MCF 10A (cell line): ENCODE measurements at regions of chr5 and their contacts with region 1.

Region 1: DNA sequence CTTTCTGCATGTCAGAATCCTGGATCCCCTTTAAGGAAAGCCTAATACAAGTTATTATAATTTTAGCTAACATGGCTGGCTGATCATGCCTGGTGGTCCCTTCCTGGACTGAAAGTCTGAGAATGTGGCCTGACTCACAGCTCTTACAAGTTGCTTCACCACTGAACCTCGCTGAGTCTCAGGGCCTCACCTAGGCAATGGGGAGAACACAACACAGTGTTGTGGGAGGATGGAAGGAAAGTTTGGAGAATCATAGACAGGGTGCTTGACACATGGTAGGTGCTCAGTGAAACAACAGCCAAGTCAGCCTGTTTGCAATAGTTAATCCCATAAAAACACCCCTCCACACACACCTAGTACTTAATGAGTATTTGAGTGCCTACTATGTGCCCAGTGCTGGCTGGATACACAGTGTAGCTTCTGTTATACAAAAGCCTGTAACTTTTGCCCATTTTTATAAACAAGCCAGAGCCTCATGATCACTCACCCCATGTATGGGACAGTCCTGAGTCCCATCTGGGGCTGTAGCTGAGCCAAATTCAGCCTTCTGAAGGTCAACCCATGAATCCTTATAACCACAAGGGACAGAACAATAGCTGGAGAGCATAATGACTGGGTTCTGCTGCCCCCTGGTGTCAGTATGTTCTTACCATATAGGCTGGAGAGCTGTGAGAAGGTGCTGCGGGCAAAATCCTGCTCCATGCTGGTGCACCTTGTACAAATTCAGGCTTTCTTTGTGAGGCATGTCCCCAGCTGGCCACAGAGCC is 3.9 kb downstream of the ACSL6 start:
- DNase-seq: peak; percentile 90
- H3K4me3 Mint-ChIP-seq: no peak overlapping the region
- H3K27ac Mint-ChIP-seq: no peak overlapping the region
- H3K4me1 Mint-ChIP-seq: peaks cover 19% of the 10 kb centered on the region
- H3K27me3 Mint-ChIP-seq: no peaks in the 10 kb centered on the region
- CTCF ChIP-seq: peak; percentile 95

Region 2: DNA sequence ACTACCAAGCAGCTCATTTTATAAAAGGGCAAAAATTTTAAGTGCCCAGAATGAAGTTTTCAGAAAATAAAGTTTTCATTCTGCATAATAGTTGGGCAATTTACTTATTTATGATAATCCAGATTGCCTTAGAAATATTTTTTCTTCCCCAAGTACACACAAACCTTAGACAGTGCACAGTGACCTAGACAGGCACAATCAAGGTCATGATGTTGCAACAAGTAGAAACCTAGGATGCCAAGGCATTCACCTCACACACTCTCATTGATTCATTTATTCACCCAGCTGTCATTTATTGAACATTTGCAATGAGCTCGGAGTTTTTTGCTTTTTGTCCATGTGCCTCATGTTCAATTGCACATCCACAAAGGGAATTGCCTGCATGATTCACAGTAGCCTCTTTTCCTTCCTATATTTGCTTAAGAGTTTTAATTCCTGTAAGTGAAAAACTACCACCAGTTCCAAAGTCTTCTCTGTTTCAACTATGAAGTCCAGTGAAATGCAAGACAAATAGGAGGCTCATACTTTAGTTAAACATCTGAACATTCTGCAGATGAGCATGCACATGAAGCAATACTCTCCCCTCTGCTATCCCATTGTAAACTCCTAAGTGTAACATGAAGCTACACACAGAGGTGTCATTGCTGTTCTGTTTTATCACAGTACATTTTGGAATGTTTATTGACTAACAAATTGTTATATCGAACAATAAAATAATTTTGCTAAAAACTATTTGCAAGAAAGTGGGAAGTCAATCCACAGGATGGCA is 965.4 kb before region 1 on chr5:
- CTCF ChIA-PET with region 1: no interaction called
- POLR2A ChIA-PET with region 1: no interaction called
- intact Hi-C with region 1: no loop called
- DNase-seq: no peak
- H3K4me3 Mint-ChIP-seq: no peak overlapping the region
- H3K27ac Mint-ChIP-seq: no peak overlapping the region
- H3K4me1 Mint-ChIP-seq: no peaks in the 10 kb centered on the region
- H3K27me3 Mint-ChIP-seq: no peaks in the 10 kb centered on the region
- CTCF ChIP-seq: no peak

Region 3: GRCh38 chr5:131514316-131515283 is 493.0 kb before region 1 on chr5:
- CTCF ChIA-PET with region 1: no interaction called
- POLR2A ChIA-PET with region 1: interaction called, 3 read pairs
- intact Hi-C with region 1: loop called (anchors 1 kb)
- DNase-seq: peak; percentile 34
- H3K4me3 Mint-ChIP-seq: no peak overlapping the region
- H3K27ac Mint-ChIP-seq: peak overlapping the region; percentile 13
- H3K4me1 Mint-ChIP-seq: peaks cover 15% of the 10 kb centered on the region
- H3K27me3 Mint-ChIP-seq: no peaks in the 10 kb centered on the region
- CTCF ChIP-seq: peak; percentile 15

Region 4: DNA sequence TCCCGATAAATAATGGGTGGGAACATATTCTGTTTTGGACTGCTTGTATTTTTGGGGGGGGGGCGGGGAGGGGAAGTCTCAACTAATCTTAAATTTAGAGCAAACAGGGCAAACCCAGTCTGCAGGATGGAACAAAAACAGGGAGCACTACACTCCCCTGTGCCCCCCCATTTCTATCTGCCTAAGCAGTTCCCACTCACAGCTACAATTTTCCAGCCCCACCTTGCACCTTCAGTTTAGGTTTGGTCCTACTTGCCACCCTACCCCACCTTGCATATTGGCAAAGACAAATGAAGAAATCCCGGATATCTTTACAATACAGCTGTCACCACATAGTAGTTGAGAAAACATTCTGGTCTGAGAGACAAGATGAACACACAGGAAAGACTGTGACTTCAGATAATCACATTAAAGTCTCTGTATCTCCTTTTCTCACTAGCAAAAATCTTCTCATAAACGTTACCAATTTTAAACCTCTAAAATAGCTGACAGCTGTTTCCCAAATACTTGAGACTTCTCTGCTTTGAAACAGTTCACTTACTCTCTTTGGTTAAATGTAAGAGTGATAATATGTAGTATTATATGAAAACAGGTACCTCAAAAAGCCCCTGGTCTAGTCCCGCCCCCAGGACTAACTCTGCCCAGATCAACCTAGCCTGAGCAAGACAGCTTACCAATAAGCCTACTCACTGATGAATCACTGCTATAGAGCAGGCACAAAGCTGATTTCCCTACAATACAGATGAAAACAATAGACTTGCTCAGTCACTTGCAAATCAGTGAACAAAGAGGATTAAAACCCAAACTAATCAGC is 367.3 kb before region 1 on chr5:
- CTCF ChIA-PET with region 1: interaction called, 12 read pairs
- POLR2A ChIA-PET with region 1: interaction called, 3 read pairs
- intact Hi-C with region 1: loop called (anchors 2 kb)
- DNase-seq: peak; percentile 32
- H3K4me3 Mint-ChIP-seq: no peak overlapping the region
- H3K27ac Mint-ChIP-seq: no peak overlapping the region
- H3K4me1 Mint-ChIP-seq: peaks cover 6% of the 10 kb centered on the region
- H3K27me3 Mint-ChIP-seq: no peaks in the 10 kb centered on the region
- CTCF ChIP-seq: no peak

Region 5: GRCh38 chr5:131810510-131811249 is 196.9 kb before region 1 on chr5:
- CTCF ChIA-PET with region 1: interaction called, 163 read pairs
- POLR2A ChIA-PET with region 1: interaction called, 5 read pairs
- intact Hi-C with region 1: loop called (anchors 1 kb)
- DNase-seq: peak; percentile 40
- H3K4me3 Mint-ChIP-seq: no peak overlapping the region
- H3K27ac Mint-ChIP-seq: no peak overlapping the region
- H3K4me1 Mint-ChIP-seq: peaks cover 13% of the 10 kb centered on the region
- H3K27me3 Mint-ChIP-seq: no peaks in the 10 kb centered on the region
- CTCF ChIP-seq: peak; percentile 63

Region 6: DNA sequence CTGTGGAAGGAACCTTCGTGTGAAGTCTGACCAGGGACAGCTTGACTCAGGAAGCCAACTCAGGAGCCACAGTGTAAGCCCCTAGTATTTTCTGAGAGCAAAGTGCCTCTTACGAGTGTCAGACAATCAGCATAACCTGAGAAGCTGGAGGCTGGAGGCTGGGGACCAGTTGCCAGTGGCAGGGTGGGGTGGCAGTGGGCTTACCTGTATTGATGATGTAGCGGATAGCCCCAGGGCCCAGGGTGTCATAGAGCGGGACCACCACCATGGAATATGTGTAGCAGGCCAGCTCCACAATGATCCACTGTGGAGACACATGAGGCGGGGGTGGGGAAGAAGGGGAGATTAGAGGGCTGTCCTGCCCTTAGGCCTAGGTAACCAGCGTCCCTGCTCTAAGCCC is 19.0 kb before region 1 on chr5:
- CTCF ChIA-PET with region 1: interaction called, 13 read pairs
- POLR2A ChIA-PET with region 1: no interaction called
- intact Hi-C with region 1: no loop called
- DNase-seq: no peak
- H3K4me3 Mint-ChIP-seq: no peak overlapping the region
- H3K27ac Mint-ChIP-seq: no peak overlapping the region
- H3K4me1 Mint-ChIP-seq: no peaks in the 10 kb centered on the region
- H3K27me3 Mint-ChIP-seq: peaks cover 14% of the 10 kb centered on the region
- CTCF ChIP-seq: no peak